ENCODE measurements at regions of chr1 and their contacts with region 1.

Region 1: DNA sequence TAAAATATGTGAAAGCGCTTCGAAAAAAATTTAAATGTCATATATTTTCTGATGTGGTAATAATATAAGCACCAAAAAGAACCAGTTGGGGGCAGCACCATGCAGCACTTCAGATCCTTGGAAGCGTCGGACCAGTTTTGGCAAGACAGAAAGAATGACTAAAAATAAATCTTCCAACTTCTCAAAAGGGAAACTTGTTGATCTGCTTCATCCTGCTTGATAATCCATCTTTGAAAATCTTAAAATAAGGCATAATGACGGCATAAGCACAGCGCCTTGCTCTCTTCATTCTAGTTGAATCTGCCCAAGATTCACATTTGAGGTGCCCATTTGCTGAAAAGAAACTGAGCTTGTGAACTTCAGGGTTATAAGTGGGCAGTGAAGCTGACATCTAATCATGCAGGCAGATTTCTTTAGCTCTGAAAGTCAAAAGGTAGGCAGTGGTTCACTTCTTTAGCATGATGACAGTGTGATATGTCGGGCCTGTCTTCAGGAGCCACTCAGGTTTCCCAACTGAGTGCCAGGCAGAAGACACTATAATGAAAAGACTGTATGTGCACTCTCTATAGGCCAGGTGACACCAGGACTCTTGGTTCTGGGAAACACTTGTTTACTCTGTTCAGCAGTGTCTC is 19.8 kb upstream of the MUTYH start:
- DNase-seq: peak; percentile 38
- H3K4me3 ChIP-seq: no peak overlapping the region
- H3K27ac ChIP-seq: no peak overlapping the region
- H3K27me3 ChIP-seq: no peaks in the 10 kb centered on the region
- CTCF ChIP-seq: peak; percentile 74

Region 2: DNA sequence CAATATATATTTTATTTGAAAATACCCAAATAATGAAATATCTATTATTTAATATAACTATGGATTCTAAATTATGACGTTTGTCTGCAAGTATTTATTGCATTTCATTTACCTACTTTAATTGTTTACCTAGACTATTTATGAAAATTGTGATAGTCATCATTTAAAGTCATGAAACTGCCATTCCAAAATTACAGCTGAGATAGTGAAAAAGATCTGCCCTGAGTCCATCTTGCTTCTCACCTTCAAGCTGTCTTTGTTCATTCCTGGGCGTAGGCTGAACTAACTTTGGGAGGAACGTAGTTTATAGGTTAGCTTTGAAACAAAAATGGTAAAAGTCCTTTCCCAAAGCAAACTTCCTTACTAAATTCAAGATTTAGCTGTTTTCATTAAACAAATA is 45.7 kb before region 1 on chr1:
- CTCF ChIA-PET with region 1: no interaction called
- POLR2A ChIA-PET with region 1: no interaction called
- DNase-seq: no peak
- H3K4me3 ChIP-seq: no peak overlapping the region
- H3K27ac ChIP-seq: no peak overlapping the region
- H3K27me3 ChIP-seq: peaks cover 6% of the 10 kb centered on the region
- CTCF ChIP-seq: no peak

Region 3: DNA sequence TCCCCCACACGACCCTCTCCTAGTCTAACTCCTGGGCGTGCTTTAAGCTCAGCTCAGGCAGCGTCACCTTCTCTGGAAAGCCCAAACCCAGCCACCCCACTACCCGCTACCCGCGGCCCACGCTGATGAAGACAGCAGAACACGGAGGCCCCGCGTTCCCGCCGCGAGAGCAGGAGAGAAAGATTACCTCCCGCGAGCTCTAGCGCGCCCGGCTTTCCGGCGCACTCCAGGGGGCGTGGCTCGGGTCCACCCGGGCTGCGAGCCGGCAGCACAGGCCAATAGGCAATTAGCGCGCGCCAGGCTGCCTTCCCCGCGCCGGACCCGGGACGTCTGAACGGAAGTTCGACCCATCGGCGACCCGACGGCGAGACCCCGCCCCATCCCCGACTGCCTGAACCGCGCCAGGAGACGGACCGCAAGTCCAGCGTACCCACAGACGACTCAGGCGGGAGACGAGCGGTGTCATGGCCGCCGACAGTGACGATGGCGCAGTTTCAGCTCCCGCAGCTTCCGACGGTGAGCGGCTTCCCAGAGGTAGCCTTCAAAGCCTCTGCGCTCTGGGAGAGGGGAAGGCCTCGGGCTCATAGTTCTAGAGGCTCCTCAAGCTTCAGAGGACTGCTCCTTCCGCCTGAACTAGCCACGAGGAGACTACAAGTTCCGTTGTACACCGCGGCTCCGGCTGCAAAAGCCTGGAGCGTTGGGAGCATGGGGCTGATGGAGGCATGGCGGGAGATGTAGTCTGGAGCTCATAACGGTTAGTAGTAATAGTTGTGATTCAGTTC is 20.0 kb before region 1 on chr1 and contains the starts of genes MUTYH and TOE1:
- CTCF ChIA-PET with region 1: interaction called, 18 read pairs
- POLR2A ChIA-PET with region 1: interaction called, 8 read pairs
- DNase-seq: peak; percentile 70
- H3K4me3 ChIP-seq: peak within 1 kb of the TSS; percentile 73
- H3K27ac ChIP-seq: peak within 1 kb of the TSS; percentile 94
- H3K27me3 ChIP-seq: no peaks in the 10 kb centered on the region
- CTCF ChIP-seq: peak; percentile 11; the same call in 1 of the 2 replicates
- polyA plus RNA-seq, gene MUTYH: 5.8 and 6.2 TPM in 2 replicates
- polyA plus RNA-seq, gene TOE1: 8.1 and 10.1 TPM in 2 replicates

Region 4: DNA sequence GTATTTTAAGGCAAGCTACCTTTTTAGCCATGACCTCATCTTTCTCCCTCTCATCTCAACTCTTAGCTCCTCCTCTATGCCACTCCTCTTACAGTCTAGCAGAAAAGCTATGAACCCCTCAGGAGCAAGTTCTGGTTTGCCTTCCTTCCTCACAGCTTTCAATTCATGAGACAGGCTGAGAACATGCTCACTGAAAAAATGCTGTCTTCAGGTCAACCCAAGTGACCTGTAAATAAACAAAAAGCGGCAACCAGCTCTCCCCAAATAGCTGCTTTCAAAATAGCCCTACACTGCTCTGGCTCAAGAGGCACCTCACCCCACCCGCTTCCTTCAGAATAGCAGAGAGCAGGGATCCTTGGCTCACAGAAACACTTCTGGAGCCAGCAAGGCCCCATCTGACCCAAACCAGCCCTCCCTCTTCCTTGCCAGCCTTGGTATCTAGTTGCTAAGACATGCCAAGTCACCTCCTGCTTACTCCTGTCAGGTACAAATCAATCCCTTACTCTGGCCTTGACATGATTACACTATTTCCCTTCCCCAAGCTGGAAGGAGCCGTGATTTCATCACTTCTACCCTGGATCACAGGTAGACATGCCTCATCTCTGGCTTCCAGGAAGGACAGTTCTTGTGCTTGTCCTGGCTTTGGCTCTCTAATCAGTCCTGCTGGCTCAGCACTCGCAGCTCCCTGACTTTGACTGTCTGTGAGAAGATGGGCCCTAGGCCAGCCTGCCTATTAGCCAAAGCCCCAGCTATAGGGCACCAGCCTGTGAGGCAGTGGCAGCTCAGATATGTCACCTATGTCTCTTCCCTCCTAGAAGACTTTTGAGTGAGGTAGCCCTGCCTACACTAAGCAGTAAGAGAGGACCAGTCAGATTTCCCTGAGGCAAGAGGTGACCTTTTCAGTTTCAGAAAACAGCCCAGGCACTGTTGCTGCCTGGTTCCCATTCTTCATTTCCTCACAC is 11.0 kb before region 1 on chr1:
- CTCF ChIA-PET with region 1: interaction called, 41 read pairs
- POLR2A ChIA-PET with region 1: interaction called, 3 read pairs
- DNase-seq: no peak
- H3K4me3 ChIP-seq: no peak overlapping the region
- H3K27ac ChIP-seq: no peak overlapping the region
- H3K27me3 ChIP-seq: no peaks in the 10 kb centered on the region
- CTCF ChIP-seq: no peak

Region 5: GRCh38 chr1:45490626-45491486 is 130.9 kb after region 1 on chr1 and contains the start of gene TESK2:
- CTCF ChIA-PET with region 1: interaction called, 456 read pairs
- POLR2A ChIA-PET with region 1: interaction called, 6 read pairs
- DNase-seq: peak; percentile 98
- H3K4me3 ChIP-seq: peak within 1 kb of the TSS; percentile 85
- H3K27ac ChIP-seq: peak within 1 kb of the TSS; percentile 47
- H3K27me3 ChIP-seq: no peaks in the 10 kb centered on the region
- CTCF ChIP-seq: no peak
- polyA plus RNA-seq, gene TESK2: 2.5 and 2.6 TPM in 2 replicates

Region 6: DNA sequence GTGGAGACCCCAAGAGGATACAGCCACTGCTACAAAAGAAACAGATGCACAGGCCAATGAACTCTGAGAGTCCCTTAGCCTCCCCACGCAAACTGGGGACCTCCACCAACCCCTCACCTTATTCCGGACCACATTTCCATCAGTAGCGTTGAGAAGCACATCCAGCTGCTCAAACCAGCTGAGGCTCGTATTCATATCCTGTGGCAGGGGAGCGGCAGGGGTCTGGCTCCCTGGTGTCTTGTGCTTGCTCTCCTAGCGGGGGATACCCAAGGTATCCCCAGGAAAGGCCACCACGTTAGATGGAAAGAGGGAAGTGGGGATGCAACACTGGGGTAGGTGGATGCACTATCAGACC is 139.4 kb after region 1 on chr1:
- CTCF ChIA-PET with region 1: interaction called, 456 read pairs
- POLR2A ChIA-PET with region 1: no interaction called
- DNase-seq: no peak
- H3K4me3 ChIP-seq: peak overlapping the region; percentile 87
- H3K27ac ChIP-seq: no peak overlapping the region
- H3K27me3 ChIP-seq: no peaks in the 10 kb centered on the region
- CTCF ChIP-seq: no peak

Region 7: GRCh38 chr1:45569962-45570581 is 210.1 kb after region 1 on chr1:
- CTCF ChIA-PET with region 1: interaction called, 15 read pairs
- POLR2A ChIA-PET with region 1: no interaction called
- DNase-seq: peak; percentile 58
- H3K4me3 ChIP-seq: no peak overlapping the region
- H3K27ac ChIP-seq: no peak overlapping the region
- H3K27me3 ChIP-seq: no peaks in the 10 kb centered on the region
- CTCF ChIP-seq: peak; percentile 99

Measured in AG04450 (cell line).